ENCODE measurements at regions of chr19 and their contacts with region 1.

Region 1: DNA sequence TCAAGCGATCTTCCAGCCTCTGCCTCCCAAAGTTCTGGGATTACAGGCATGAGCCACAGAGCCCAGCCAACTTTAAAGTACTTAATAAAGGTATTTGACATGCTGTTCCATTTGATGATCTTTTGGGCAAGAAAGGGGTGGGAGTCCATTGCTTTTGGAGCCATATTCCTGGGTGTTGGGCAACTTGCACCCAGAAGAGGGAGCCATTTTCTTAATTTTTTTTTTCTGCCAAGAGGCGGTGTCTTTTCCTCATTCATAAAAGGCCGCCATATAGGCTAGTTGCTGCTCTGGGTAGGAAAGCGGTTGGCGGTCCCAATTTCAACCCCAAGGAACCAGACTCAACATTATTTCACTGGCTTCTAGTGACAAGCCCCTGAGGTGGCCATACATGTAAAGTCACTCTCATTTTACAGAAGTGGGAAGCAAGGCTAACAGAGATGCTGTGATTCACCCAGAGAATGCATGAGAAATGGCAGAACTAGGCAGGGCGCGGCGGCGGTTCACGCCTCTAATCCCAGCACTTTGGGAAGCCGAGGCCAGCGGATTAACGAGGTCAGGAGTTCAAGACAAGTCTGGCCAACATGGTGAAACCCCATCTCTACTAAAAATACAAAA is 139.6 kb downstream of the CACNA1A start:
- DNase-seq: peak; percentile 5
- H3K4me3 ChIP-seq: no peak overlapping the region
- H3K27ac ChIP-seq: no peak overlapping the region
- H3K4me1 ChIP-seq: no peaks in the 10 kb centered on the region
- H3K27me3 ChIP-seq: no peaks in the 10 kb centered on the region
- CTCF ChIP-seq: peak; percentile 65 to 67

Region 2: GRCh38 chr19:13291759-13292312 is 74.8 kb before region 1 on chr19:
- CTCF ChIA-PET with region 1: no interaction called
- dilution Hi-C with region 1: loop called (anchors 5 kb)
- in situ Hi-C with region 1: no loop called
- intact Hi-C with region 1: no loop called
- DNase-seq: no peak
- H3K4me3 ChIP-seq: no peak overlapping the region
- H3K27ac ChIP-seq: no peak overlapping the region
- H3K4me1 ChIP-seq: no peaks in the 10 kb centered on the region
- H3K27me3 ChIP-seq: no peaks in the 10 kb centered on the region
- CTCF ChIP-seq: no peak

Region 3: GRCh38 chr19:13441810-13442512 is 75.3 kb after region 1 on chr19:
- CTCF ChIA-PET with region 1: no interaction called
- dilution Hi-C with region 1: no loop called
- in situ Hi-C with region 1: no loop called
- intact Hi-C with region 1: no loop called
- DNase-seq: peak; percentile 21
- H3K4me3 ChIP-seq: no peak overlapping the region
- H3K27ac ChIP-seq: no peak overlapping the region
- H3K4me1 ChIP-seq: no peaks in the 10 kb centered on the region
- H3K27me3 ChIP-seq: no peaks in the 10 kb centered on the region
- CTCF ChIP-seq: no peak

Region 4: GRCh38 chr19:13588957-13589833 is 222.6 kb after region 1 on chr19:
- CTCF ChIA-PET with region 1: no interaction called
- dilution Hi-C with region 1: no loop called
- in situ Hi-C with region 1: no loop called
- intact Hi-C with region 1: loop called (anchors 2 kb)
- DNase-seq: peak; percentile 40
- H3K4me3 ChIP-seq: no peak overlapping the region
- H3K27ac ChIP-seq: no peak overlapping the region
- H3K4me1 ChIP-seq: no peaks in the 10 kb centered on the region
- H3K27me3 ChIP-seq: no peaks in the 10 kb centered on the region
- CTCF ChIP-seq: peak; percentile 74 to 97

Region 5: DNA sequence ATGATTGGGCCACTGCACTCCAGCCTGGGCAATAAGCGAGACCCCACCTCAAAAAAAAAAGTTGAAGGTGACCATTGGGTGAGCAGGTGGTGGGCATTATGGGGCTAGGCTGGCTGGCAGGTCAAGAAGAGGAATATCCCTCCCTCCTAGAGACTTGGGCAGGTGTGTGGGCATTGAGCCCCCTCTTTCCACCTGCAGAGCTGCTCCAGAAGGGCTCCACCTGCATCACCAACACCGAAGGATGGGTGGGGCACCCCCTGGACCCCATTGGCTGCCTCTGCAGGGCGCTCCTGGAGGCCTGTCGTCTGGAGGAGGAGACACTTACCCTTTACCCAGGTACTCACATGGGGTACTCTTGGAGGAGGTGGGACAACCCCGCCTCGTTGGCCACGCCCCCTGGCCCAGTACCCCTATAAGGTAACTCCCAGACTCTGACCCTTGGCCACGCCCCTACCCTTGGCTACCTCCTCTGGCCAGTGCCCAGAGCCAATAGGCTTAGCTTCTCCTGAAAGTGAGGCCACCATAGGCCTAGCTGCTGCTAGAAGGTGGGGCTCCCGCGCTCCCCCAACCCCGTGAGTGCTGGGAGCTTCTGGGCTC is 450.5 kb after region 1 on chr19:
- CTCF ChIA-PET with region 1: no interaction called
- dilution Hi-C with region 1: no loop called
- in situ Hi-C with region 1: no loop called
- intact Hi-C with region 1: no loop called
- DNase-seq: no peak
- H3K4me3 ChIP-seq: no peak overlapping the region
- H3K27ac ChIP-seq: no peak overlapping the region
- H3K4me1 ChIP-seq: no peaks in the 10 kb centered on the region
- H3K27me3 ChIP-seq: no peaks in the 10 kb centered on the region
- CTCF ChIP-seq: no peak

Measured in mammary epithelial cell (primary cell).